ENCODE measurements at regions of chr12 and their contacts with region 1.

Region 1: GRCh38 chr12:9647825-9648700 is 21.4 kb upstream of the CLEC2D start:
- DNase-seq: peak; percentile 79 to 98 (median 90)
- ATAC-seq: peak; percentile 76
- H3K4me3 ChIP-seq: peak overlapping the region; percentile 81 to 85
- H3K4me3 Mint-ChIP-seq: peak overlapping the region; percentile 98
- H3K27ac ChIP-seq: peak overlapping the region; percentile 83 to 93
- H3K27ac Mint-ChIP-seq: peak overlapping the region; percentile 96
- H3K4me1 ChIP-seq: peaks cover 55% of the 10 kb centered on the region
- H3K4me1 Mint-ChIP-seq: peaks cover 61% of the 10 kb centered on the region
- H3K27me3 ChIP-seq: no peaks in the 10 kb centered on the region
- H3K27me3 Mint-ChIP-seq: no peaks in the 10 kb centered on the region
- CTCF ChIP-seq: no peak

Region 2: GRCh38 chr12:9634177-9634803 is 13.8 kb before region 1 on chr12:
- CTCF ChIA-PET with region 1: interaction called, 17 read pairs
- POLR2A ChIA-PET with region 1: interaction called, 17 read pairs
- intact Hi-C with region 1: loop called (anchors 1 kb)
- DNase-seq: peak; percentile 59 to 87 (median 83)
- ATAC-seq: peak; percentile 95
- H3K4me3 ChIP-seq: no peak overlapping the region
- H3K4me3 Mint-ChIP-seq: peak overlapping the region; percentile 33
- H3K27ac ChIP-seq: peak overlapping the region in 1 of 2 experiments; percentile 23
- H3K27ac Mint-ChIP-seq: peak overlapping the region; percentile 92
- H3K4me1 ChIP-seq: peaks cover 43% of the 10 kb centered on the region
- H3K4me1 Mint-ChIP-seq: peaks cover 64% of the 10 kb centered on the region
- H3K27me3 ChIP-seq: no peaks in the 10 kb centered on the region
- H3K27me3 Mint-ChIP-seq: no peaks in the 10 kb centered on the region
- CTCF ChIP-seq: peak; percentile 93

Region 3: GRCh38 chr12:9687228-9687627 is 39.2 kb after region 1 on chr12:
- CTCF ChIA-PET with region 1: interaction called, 5 read pairs
- POLR2A ChIA-PET with region 1: interaction called, 58 read pairs
- intact Hi-C with region 1: loop called (anchors 5 kb)
- DNase-seq: peak in 2 of 9 experiments; percentile 50 to 68
- ATAC-seq: peak; percentile 61
- H3K4me3 ChIP-seq: no peak overlapping the region
- H3K4me3 Mint-ChIP-seq: no peak overlapping the region
- H3K27ac ChIP-seq: peak overlapping the region in 1 of 2 experiments; percentile 50
- H3K27ac Mint-ChIP-seq: peak overlapping the region; percentile 67
- H3K4me1 ChIP-seq: peaks cover 41% of the 10 kb centered on the region
- H3K4me1 Mint-ChIP-seq: peaks cover 76% of the 10 kb centered on the region
- H3K27me3 ChIP-seq: no peaks in the 10 kb centered on the region
- H3K27me3 Mint-ChIP-seq: no peaks in the 10 kb centered on the region
- CTCF ChIP-seq: no peak

Region 4: GRCh38 chr12:9741726-9742125 is 93.7 kb after region 1 on chr12:
- CTCF ChIA-PET with region 1: interaction called, 10 read pairs
- POLR2A ChIA-PET with region 1: interaction called, 20 read pairs
- intact Hi-C with region 1: loop called (anchors 1 to 2 kb)
- DNase-seq: peak; percentile 44 to 95 (median 67)
- ATAC-seq: peak; percentile 59
- H3K4me3 ChIP-seq: peak overlapping the region; percentile 13 to 19
- H3K4me3 Mint-ChIP-seq: peak overlapping the region; percentile 77
- H3K27ac ChIP-seq: peak overlapping the region; percentile 63 to 68
- H3K27ac Mint-ChIP-seq: peak overlapping the region; percentile 97
- H3K4me1 ChIP-seq: peaks cover 60% of the 10 kb centered on the region
- H3K4me1 Mint-ChIP-seq: peaks cover 67% of the 10 kb centered on the region
- H3K27me3 ChIP-seq: no peaks in the 10 kb centered on the region
- H3K27me3 Mint-ChIP-seq: no peaks in the 10 kb centered on the region
- CTCF ChIP-seq: no peak

Region 5: DNA sequence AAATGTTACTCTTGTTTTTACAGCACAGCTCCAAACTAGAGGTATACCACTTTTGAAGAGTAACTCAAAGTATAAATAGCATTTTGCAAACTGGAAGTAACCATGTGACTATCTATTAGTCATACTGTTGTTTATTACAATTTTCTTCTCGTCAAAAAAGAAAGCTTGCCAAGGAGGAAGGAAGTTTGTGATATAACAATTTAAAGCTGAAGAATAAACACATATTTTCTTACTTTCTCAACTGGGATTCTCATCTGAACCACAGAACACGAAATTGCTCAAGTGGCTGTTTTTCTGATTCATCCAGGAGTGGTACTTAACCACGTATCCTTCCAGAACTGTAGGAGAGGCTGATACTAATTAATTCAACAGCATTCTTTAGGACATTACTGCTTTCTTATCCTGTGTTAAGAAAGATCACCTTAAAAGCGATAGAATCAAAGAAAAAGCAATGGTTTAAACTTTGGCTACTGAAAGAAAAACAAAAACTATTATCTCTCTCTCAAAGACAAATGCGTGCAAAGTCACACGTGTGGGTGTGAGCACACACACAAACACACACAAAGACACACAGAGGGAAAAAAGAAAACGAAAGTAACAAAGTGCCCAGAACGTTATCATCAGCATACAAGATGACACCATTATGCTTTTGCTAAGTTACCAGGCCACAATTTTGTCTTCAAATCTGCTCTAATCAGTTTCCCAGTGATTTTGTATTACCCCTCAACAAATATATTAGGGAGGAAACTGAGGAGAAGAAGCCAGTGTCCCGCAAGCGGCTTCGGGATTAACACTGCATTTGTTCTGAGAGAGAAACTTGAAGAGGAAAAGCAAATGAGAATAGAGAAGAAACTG is 221.5 kb after region 1 on chr12 and contains the start of gene CLEC2B:
- CTCF ChIA-PET with region 1: no interaction called
- POLR2A ChIA-PET with region 1: interaction called, 4 read pairs
- intact Hi-C with region 1: loop called in 1 of 2 experiments (anchors 10 kb)
- DNase-seq: peak in 3 of 9 experiments; percentile 50 to 86 (median 71)
- ATAC-seq: peak; percentile 70
- H3K4me3 ChIP-seq: peak within 1 kb of the TSS; percentile 41 to 64
- H3K4me3 Mint-ChIP-seq: peak within 1 kb of the TSS; percentile 89
- H3K27ac ChIP-seq: peak within 1 kb of the TSS; percentile 79 to 92
- H3K27ac Mint-ChIP-seq: peak within 1 kb of the TSS; percentile 96
- H3K4me1 ChIP-seq: peaks cover 7% of the 10 kb centered on the region
- H3K4me1 Mint-ChIP-seq: peaks cover 36% of the 10 kb centered on the region
- H3K27me3 ChIP-seq: no peaks in the 10 kb centered on the region
- H3K27me3 Mint-ChIP-seq: no peaks in the 10 kb centered on the region
- CTCF ChIP-seq: no peak
- total RNA-seq, gene CLEC2B: 141 to 145 TPM

Region 6: GRCh38 chr12:10721651-10722501 is 1073.8 kb after region 1 on chr12:
- CTCF ChIA-PET with region 1: no interaction called
- POLR2A ChIA-PET with region 1: no interaction called
- intact Hi-C with region 1: loop called in 1 of 2 experiments (anchors 5 kb)
- DNase-seq: peak; percentile 26 to 96 (median 63)
- ATAC-seq: peak; percentile 75
- H3K4me3 ChIP-seq: peak overlapping the region; percentile 69 to 72
- H3K4me3 Mint-ChIP-seq: peak overlapping the region; percentile 91
- H3K27ac ChIP-seq: peak overlapping the region; percentile 86 to 94
- H3K27ac Mint-ChIP-seq: peak overlapping the region; percentile 93
- H3K4me1 ChIP-seq: peaks cover 25% of the 10 kb centered on the region
- H3K4me1 Mint-ChIP-seq: peaks cover 50% of the 10 kb centered on the region
- H3K27me3 ChIP-seq: peaks cover 0 to 6% of the 10 kb centered on the region in 2 experiments
- H3K27me3 Mint-ChIP-seq: peaks cover 15% of the 10 kb centered on the region
- CTCF ChIP-seq: no peak